ENCODE measurements at regions of chr5 and their contacts with region 1.

Region 1: DNA sequence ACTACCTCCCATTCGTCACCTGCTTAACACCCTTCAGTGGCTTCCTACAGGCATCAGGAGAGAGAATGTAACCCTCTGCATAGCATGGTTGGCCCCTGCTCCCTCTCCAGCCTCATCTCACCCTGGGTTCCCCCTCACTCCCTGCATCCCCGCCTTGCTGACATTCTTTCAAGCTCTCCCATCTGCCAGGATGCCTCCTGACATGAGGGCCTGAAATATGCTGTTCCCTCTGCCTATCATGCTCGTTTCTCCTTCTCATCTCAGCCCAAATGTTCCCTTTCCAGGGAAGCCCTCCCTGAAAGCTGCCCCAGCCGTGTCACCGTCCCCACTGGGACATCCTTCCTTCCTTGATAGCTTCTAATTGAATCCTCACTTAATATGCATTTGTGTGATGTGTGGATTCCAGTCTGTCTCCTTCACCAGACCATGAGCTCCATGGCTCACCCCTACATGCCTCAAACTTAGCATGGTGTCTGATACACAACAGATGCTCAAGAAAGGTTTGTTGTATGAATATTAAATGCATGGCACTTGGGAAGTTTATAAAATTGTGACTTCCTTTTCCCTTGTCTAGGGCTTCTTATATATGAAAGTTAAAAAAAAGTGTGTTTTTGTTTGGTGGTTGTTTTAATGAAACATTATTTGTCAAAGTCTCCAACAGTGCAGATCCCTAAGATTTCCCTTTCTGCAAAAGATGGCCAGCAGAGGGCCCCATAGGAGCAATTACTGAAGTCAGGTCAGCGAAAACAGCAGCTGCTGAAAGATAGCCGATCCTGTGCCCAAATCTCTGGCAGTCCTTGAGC is 7.3 kb upstream of the C5orf58 start:
- DNase-seq: peak; percentile 82
- ATAC-seq: peak; percentile 80

Region 2: DNA sequence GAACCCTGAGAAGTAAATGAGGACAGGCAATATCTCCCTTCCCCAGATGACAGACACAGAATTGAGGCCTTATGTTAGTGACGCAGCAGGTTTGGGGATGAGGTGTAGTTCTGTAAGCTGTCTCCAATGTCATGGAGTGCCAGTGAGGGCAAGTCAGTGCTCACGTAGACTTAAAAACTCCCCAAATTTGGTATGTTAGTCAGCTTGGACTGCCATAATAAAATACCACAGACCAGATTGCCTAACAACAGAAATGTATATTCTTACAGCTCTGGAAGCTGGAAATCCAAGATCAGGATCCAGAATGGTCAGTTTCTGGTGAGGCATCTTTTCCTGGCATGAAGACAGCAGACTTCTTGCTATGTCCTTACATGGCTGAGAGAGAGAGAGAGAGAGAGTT is 105.0 kb before region 1 on chr5:
- intact Hi-C with region 1: no loop called
- DNase-seq: no peak
- ATAC-seq: no peak

Region 3: GRCh38 chr5:170267431-170268152 is 42.1 kb after region 1 on chr5:
- intact Hi-C with region 1: loop called (anchors 2 kb)
- DNase-seq: peak; percentile 86
- ATAC-seq: peak; percentile 63

Region 4: DNA sequence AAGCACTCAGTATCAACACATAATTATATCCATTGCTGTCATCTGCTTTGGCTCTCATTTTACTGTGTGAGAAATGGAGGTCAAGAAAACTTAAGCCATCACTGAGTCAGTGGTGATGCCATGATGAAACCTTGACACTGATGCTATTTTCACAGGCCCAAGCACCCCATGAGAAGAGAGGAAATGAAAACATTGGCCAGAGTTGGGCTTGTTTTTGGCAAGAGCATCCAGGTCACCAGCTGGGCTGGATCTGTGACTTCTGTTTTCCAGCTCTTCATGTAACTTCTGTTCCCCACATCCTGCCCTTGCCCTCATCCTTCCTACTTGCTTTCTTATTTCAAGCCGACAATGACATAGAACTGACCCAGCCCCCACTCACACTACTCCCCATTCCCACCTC is 62.0 kb after region 1 on chr5:
- intact Hi-C with region 1: no loop called
- DNase-seq: peak; percentile 77
- ATAC-seq: peak; percentile 85

Region 5: DNA sequence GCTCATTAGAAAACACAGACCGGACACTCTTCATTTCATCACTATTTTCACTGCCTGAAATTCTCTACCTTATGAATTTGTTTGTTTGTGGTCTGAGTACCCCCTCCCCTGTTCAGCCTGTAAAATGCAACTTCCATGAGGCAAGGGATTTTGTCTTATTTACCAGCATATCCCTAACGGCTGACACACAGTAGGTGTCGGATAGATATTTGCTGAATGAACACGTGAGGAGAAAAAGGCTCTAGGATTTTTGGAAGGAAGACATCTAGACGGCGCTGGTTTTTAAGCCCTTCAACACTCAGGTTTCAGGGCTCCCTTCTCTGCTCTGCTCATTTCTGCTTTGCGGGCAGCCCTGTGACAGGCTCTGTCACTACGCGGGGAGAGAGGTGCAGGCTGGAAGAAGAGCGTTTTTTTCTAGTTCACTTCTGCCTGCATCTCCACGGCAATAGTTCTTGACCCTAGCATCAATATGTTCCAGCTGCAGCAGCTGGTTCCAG is 122.7 kb after region 1 on chr5:
- intact Hi-C with region 1: loop called (anchors 5 kb)
- DNase-seq: no peak
- ATAC-seq: peak; percentile 32

Region 6: DNA sequence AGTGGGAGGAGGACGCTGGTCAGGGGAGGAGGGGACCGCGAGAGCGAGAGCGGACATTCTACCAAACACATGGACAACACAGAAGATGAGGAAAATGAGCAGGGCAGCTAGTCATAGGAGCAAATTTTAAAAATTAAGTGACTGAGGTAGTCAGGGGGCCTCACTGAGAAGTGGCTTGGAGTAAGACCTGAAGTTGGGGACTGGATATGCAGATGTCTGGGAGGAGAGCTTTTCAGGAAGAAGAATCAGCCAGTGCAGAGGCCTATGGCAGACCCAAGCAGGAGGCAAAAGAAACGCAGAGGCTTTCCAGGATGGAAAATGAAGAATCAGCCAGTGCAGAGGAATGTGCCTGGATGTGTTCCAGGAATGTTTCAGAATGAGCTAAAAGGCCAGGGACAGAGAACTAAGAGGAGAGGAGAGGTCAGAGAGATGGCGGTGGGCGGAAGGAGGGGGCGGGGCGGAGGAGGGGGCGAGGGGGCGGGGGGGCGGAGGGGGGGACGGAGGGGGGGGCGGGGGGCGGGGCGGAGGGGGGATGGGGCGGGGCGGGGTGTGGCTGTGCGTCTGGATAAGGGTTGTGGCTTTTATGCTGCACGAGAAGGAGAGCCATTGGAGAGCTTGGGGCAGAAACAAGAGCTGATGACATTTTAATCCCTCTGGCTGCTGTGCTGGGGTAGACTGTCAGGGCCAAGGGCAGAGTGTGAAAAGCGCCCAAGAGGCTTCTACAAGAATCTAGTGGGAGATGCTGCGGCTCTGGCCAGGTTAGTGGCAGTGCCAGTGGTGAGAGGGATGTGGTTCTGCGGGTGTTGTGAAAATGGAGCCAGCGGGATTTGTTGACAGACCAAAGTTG is 407.9 kb after region 1 on chr5:
- intact Hi-C with region 1: loop called (anchors 5 kb)
- DNase-seq: peak; percentile 66
- ATAC-seq: peak; percentile 77